ENCODE measurements at regions of chr4 and their contacts with region 1.

Region 1: GRCh38 chr4:155734065-155734464 is 24.8 kb upstream of the GUCY1B1 start:
- DNase-seq: no peak
- ATAC-seq: no peak
- H3K4me3 ChIP-seq: no peak overlapping the region
- H3K27ac ChIP-seq: no peak overlapping the region
- H3K4me1 ChIP-seq: no peaks in the 10 kb centered on the region
- H3K27me3 ChIP-seq: no peaks in the 10 kb centered on the region
- CTCF ChIP-seq: no peak
- POLR2A ChIP-seq: no peak
- RAD21 ChIP-seq: no peak

Region 2: GRCh38 chr4:155703486-155704247 is 30.4 kb before region 1 on chr4:
- CTCF ChIA-PET with region 1: no interaction called
- POLR2A ChIA-PET with region 1: no interaction called
- RAD21 ChIA-PET with region 1: no interaction called
- intact Hi-C with region 1: loop called (anchors 2 kb)
- DNase-seq: no peak
- ATAC-seq: no peak
- H3K4me3 ChIP-seq: no peak overlapping the region
- H3K27ac ChIP-seq: no peak overlapping the region
- H3K4me1 ChIP-seq: peaks cover 6% of the 10 kb centered on the region in 2 experiments; a peak in 2 of 4 replicates
- H3K27me3 ChIP-seq: no peaks in the 10 kb centered on the region
- CTCF ChIP-seq: no peak
- POLR2A ChIP-seq: no peak
- RAD21 ChIP-seq: no peak

Region 3: GRCh38 chr4:156475322-156475721 is 741.3 kb after region 1 on chr4:
- CTCF ChIA-PET with region 1: no interaction called
- POLR2A ChIA-PET with region 1: no interaction called
- RAD21 ChIA-PET with region 1: no interaction called
- intact Hi-C with region 1: no loop called
- DNase-seq: peak; percentile 42
- ATAC-seq: peak; percentile 73
- H3K4me3 ChIP-seq: no peak overlapping the region
- H3K27ac ChIP-seq: no peak overlapping the region
- H3K4me1 ChIP-seq: peaks cover 0 to 16% of the 10 kb centered on the region in 2 experiments; a peak in 2 of 4 replicates
- H3K27me3 ChIP-seq: no peaks in the 10 kb centered on the region
- CTCF ChIP-seq: peak; percentile 28 to 61 (median 54); a peak in 4 of 6 replicates
- POLR2A ChIP-seq: no peak
- RAD21 ChIP-seq: peak; percentile 86

Region 4: GRCh38 chr4:157220371-157220881 is 1486.4 kb after region 1 on chr4 and contains the start of gene GRIA2:
- CTCF ChIA-PET with region 1: no interaction called
- POLR2A ChIA-PET with region 1: no interaction called
- RAD21 ChIA-PET with region 1: no interaction called
- intact Hi-C with region 1: no loop called
- DNase-seq: no peak
- ATAC-seq: no peak
- H3K4me3 ChIP-seq: no peak within 1 kb of the TSS
- H3K27ac ChIP-seq: no peak within 1 kb of the TSS
- H3K4me1 ChIP-seq: no peaks in the 10 kb centered on the region
- H3K27me3 ChIP-seq: no peaks in the 10 kb centered on the region
- CTCF ChIP-seq: no peak
- POLR2A ChIP-seq: no peak
- RAD21 ChIP-seq: no peak
- total RNA-seq, gene GRIA2: not detected